ENCODE measurements at regions of chr12 and their contacts with region 1.

Region 1: GRCh38 chr12:95810411-95810810 is 19.8 kb upstream of the NTN4 start:
- DNase-seq: no peak
- ATAC-seq: no peak
- H3K4me3 ChIP-seq: no peak overlapping the region
- H3K27ac ChIP-seq: no peak overlapping the region
- H3K4me1 ChIP-seq: peaks cover 0 to 13% (median 10%) of the 10 kb centered on the region in 3 donors
- H3K27me3 ChIP-seq: no peaks in the 10 kb centered on the region
- CTCF ChIP-seq: no peak

Region 2: DNA sequence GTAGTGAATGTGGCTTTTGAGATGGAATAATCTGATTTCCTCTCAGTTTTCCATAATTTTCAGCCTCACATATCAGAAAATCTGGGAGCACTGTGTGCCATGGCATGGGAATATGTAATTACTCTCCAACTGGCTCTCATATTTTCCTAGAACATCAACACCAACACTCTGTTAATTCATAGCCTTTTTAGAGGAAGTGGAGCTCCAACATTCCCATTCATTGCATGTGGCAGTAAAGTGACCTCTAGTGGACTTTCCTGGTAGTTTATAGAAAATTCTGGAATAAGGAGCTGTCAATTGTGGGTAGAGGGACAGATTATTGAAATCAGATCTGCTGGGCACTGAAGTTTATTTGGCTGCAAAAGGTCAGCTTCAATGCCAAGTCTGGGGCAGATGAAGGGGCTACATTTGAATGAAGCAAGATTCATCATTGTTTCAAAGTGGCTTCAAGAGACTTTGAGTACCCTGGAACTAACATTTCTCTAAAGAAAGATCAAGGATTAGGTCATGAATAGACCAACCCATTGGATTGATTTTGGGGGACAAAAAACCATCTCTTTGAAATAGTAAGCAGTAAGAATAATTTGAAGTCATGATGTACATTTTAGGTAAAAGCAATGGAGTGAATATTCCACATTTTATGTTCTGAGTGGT is 235.5 kb before region 1 on chr12:
- intact Hi-C with region 1: loop called in 1 of 3 experiments (anchors 5 kb)
- DNase-seq: no peak
- ATAC-seq: peak; percentile 48 to 95 (median 86)
- H3K4me3 ChIP-seq: no peak overlapping the region
- H3K27ac ChIP-seq: no peak overlapping the region
- H3K4me1 ChIP-seq: no peaks in the 10 kb centered on the region
- H3K27me3 ChIP-seq: no peaks in the 10 kb centered on the region
- CTCF ChIP-seq: peak; percentile 42 to 63 (median 56)

Region 3: GRCh38 chr12:95755261-95755865 is 55.0 kb before region 1 on chr12:
- intact Hi-C with region 1: no loop called
- DNase-seq: peak in 1 of 6 donors; percentile 33
- ATAC-seq: peak; percentile 31 to 88 (median 49)
- H3K4me3 ChIP-seq: no peak overlapping the region
- H3K27ac ChIP-seq: peak overlapping the region in 1 of 4 donors; percentile 44
- H3K4me1 ChIP-seq: peaks cover 0 to 13% (median 8%) of the 10 kb centered on the region in 3 donors
- H3K27me3 ChIP-seq: no peaks in the 10 kb centered on the region
- CTCF ChIP-seq: no peak